GM12878 (cell line): ENCODE measurements at regions of chr16 and their contacts with region 1.

Region 1: DNA sequence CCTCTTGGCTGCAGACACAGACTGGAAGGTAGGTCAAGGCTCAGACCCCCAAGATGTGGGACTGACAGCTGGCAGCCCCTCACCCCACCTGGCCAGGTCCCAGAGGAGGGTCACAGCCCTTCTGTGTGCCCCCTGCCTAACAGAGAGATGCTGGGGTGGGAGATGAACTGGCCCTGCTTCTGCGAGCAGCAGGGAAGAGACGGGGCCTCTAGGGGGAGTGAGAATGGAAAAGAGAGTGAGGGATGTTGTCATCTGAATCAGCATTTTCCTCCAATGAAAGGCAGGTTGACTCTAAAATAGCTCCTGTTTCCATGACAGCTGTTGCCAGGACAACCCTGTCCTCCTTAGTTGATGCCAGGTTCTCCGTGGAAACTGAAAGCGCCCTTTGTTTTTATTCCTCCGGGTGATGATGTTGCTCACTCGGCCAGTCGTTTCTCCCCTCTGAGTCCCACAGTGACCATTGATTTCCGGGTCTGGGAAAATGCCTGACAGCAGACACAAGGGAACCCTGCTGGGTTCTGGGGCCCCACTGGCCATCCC is 4.9 kb upstream of the NDRG4 start:
- DNase-seq: peak; percentile 59
- ATAC-seq: peak; percentile 73
- H3K4me3 ChIP-seq: no peak overlapping the region
- H3K27ac ChIP-seq: no peak overlapping the region
- H3K4me1 ChIP-seq: peaks cover 21% of the 10 kb centered on the region
- H3K27me3 ChIP-seq: no peaks in the 10 kb centered on the region; a peak in 2 of 4 replicates
- CTCF ChIP-seq: peak; percentile 48 to 57 (median 52)
- EP300 ChIP-seq: no peak
- POLR2A ChIP-seq: no peak
- RAD21 ChIP-seq: 0 out of 2 replicates have a peak, but pooled peaks have one; percentile 9

Region 2: DNA sequence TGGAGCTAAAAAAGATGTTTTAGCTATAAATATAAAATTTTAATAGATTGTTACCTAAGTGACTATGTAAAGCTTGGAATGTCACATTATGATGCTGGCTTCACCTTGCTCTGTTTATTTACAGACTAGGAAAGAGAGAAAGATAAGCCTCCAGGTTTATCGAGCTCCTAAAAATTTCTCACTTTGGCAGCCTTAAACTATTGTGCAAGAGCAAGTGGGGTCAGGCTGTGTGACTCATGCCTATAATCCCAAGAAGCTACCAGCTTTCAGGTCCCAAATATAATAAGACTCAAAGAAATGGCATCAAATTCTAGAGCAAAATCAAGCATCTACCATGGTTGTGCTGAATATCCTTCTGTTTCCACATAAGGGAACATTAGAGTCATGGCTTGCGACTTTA is 165.9 kb before region 1 on chr16:
- CTCF ChIA-PET with region 1: interaction called, 209 read pairs
- POLR2A ChIA-PET with region 1: no interaction called
- RAD21 ChIA-PET with region 1: no interaction called
- SMC1A ChIA-PET with region 1: no interaction called
- in situ Hi-C with region 1: loop called (anchors 5 kb)
- intact Hi-C with region 1: no loop called
- DNase-seq: no peak
- ATAC-seq: no peak
- H3K4me3 ChIP-seq: no peak overlapping the region
- H3K27ac ChIP-seq: no peak overlapping the region
- H3K4me1 ChIP-seq: no peaks in the 10 kb centered on the region
- H3K27me3 ChIP-seq: no peaks in the 10 kb centered on the region
- CTCF ChIP-seq: no peak
- EP300 ChIP-seq: no peak
- POLR2A ChIP-seq: no peak
- RAD21 ChIP-seq: no peak

Region 3: DNA sequence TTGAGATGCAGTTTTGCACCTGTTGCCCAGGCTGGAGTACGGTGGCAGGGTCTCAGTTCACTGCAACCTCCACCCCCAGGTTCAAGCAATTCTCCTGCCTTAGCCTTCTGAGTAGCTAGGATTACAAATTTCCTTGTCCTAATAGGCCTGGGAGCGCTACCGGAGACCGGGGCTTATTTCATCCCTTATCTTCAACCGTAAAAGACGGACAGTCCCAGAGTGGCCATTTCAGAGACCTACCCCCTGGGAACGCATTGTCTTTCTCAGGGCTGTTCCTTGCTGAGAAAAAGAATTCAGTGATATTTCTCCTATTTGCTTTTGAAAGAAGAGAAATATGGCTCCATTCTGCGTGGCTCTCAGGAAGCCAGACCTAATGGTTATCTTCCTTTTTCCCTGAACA is 142.4 kb before region 1 on chr16:
- CTCF ChIA-PET with region 1: no interaction called
- POLR2A ChIA-PET with region 1: no interaction called
- RAD21 ChIA-PET with region 1: no interaction called
- SMC1A ChIA-PET with region 1: no interaction called
- in situ Hi-C with region 1: no loop called
- intact Hi-C with region 1: no loop called
- DNase-seq: no peak
- ATAC-seq: no peak
- H3K4me3 ChIP-seq: no peak overlapping the region
- H3K27ac ChIP-seq: no peak overlapping the region
- H3K4me1 ChIP-seq: no peaks in the 10 kb centered on the region
- H3K27me3 ChIP-seq: no peaks in the 10 kb centered on the region; a peak in 1 of 4 replicates
- CTCF ChIP-seq: no peak
- EP300 ChIP-seq: no peak
- POLR2A ChIP-seq: no peak
- RAD21 ChIP-seq: no peak

Region 4: GRCh38 chr16:58661199-58661830 is 166.3 kb after region 1 on chr16:
- CTCF ChIA-PET with region 1: interaction called, 4 read pairs
- POLR2A ChIA-PET with region 1: no interaction called
- RAD21 ChIA-PET with region 1: no interaction called
- SMC1A ChIA-PET with region 1: no interaction called
- in situ Hi-C with region 1: no loop called
- intact Hi-C with region 1: loop called (anchors 5 kb)
- DNase-seq: no peak
- ATAC-seq: peak; percentile 96
- H3K4me3 ChIP-seq: no peak overlapping the region
- H3K27ac ChIP-seq: no peak overlapping the region
- H3K4me1 ChIP-seq: no peaks in the 10 kb centered on the region
- H3K27me3 ChIP-seq: no peaks in the 10 kb centered on the region
- CTCF ChIP-seq: peak; percentile 57 to 90 (median 70); a peak in 5 of 6 replicates
- EP300 ChIP-seq: no peak
- POLR2A ChIP-seq: no peak
- RAD21 ChIP-seq: peak; percentile 86

Region 5: GRCh38 chr16:58733671-58734458 is 238.8 kb after region 1 on chr16 and contains the start of gene GOT2:
- CTCF ChIA-PET with region 1: no interaction called
- POLR2A ChIA-PET with region 1: no interaction called
- RAD21 ChIA-PET with region 1: no interaction called
- SMC1A ChIA-PET with region 1: no interaction called
- in situ Hi-C with region 1: loop called (anchors 25 kb)
- intact Hi-C with region 1: loop called (anchors 5 kb)
- DNase-seq: peak; percentile 43
- ATAC-seq: peak; percentile 95
- H3K4me3 ChIP-seq: peak within 1 kb of the TSS; percentile 89
- H3K27ac ChIP-seq: peak within 1 kb of the TSS; percentile 64
- H3K4me1 ChIP-seq: peaks cover 7% of the 10 kb centered on the region
- H3K27me3 ChIP-seq: no peaks in the 10 kb centered on the region; a peak in 1 of 4 replicates
- CTCF ChIP-seq: peak; percentile 96 to 98 (median 98); a peak in 5 of 6 replicates
- EP300 ChIP-seq: no peak
- POLR2A ChIP-seq: peak; percentile 88
- RAD21 ChIP-seq: peak; percentile 24; the same call in 1 of the 2 replicates
- polyA plus RNA-seq, gene GOT2: 79.4 to 81.0 TPM